MCF 10A (cell line): ENCODE measurements at regions of chr11 and their contacts with region 1.

Region 1: GRCh38 chr11:93234602-93235207 is 36.9 kb upstream of the SLC36A4 start:
- DNase-seq: peak; percentile 80
- H3K4me3 Mint-ChIP-seq: no peak overlapping the region
- H3K27ac Mint-ChIP-seq: no peak overlapping the region
- H3K4me1 Mint-ChIP-seq: no peaks in the 10 kb centered on the region
- H3K27me3 Mint-ChIP-seq: peaks cover 22% of the 10 kb centered on the region
- CTCF ChIP-seq: peak; percentile 91

Region 2: GRCh38 chr11:93248602-93249001 is 13.9 kb after region 1 on chr11:
- CTCF ChIA-PET with region 1: interaction called, 28 read pairs
- POLR2A ChIA-PET with region 1: no interaction called
- intact Hi-C with region 1: no loop called
- DNase-seq: no peak
- H3K4me3 Mint-ChIP-seq: no peak overlapping the region
- H3K27ac Mint-ChIP-seq: no peak overlapping the region
- H3K4me1 Mint-ChIP-seq: no peaks in the 10 kb centered on the region
- H3K27me3 Mint-ChIP-seq: no peaks in the 10 kb centered on the region
- CTCF ChIP-seq: peak; percentile 17

Region 3: GRCh38 chr11:93543292-93543977 is 308.7 kb after region 1 on chr11 and contains the start of gene SMCO4:
- CTCF ChIA-PET with region 1: interaction called, 94 read pairs
- POLR2A ChIA-PET with region 1: no interaction called
- intact Hi-C with region 1: loop called (anchors 1 kb)
- DNase-seq: peak; percentile 79
- H3K4me3 Mint-ChIP-seq: peak within 1 kb of the TSS; percentile 79
- H3K27ac Mint-ChIP-seq: peak within 1 kb of the TSS; percentile 57
- H3K4me1 Mint-ChIP-seq: peaks cover 8% of the 10 kb centered on the region
- H3K27me3 Mint-ChIP-seq: peaks cover 11% of the 10 kb centered on the region
- CTCF ChIP-seq: peak; percentile 78
- total RNA-seq, gene SMCO4: 8.5 and 10.0 TPM in 2 replicates

Region 4: DNA sequence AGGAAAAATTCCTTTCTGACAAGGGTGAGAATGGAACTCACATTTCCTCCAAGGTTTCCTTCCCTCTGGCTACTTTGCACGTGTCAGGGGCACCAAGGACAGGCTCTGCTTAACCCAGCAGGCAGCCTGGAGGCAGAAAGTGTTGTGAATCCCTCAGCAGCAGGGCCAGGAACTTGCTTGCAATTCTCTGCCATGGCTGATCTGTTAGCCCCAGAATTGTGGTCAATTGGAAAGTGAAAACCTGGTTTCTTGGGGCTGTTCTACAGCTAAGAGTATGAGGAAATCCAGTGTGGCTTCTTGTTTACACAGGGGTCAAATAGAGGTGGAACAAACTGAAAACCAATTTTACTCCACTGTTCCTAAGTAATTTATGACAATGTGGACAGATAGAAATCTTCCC is 388.5 kb after region 1 on chr11:
- CTCF ChIA-PET with region 1: interaction called, 10 read pairs
- POLR2A ChIA-PET with region 1: no interaction called
- intact Hi-C with region 1: loop called (anchors 1 kb)
- DNase-seq: no peak
- H3K4me3 Mint-ChIP-seq: no peak overlapping the region
- H3K27ac Mint-ChIP-seq: no peak overlapping the region
- H3K4me1 Mint-ChIP-seq: no peaks in the 10 kb centered on the region
- H3K27me3 Mint-ChIP-seq: no peaks in the 10 kb centered on the region
- CTCF ChIP-seq: no peak

Region 5: DNA sequence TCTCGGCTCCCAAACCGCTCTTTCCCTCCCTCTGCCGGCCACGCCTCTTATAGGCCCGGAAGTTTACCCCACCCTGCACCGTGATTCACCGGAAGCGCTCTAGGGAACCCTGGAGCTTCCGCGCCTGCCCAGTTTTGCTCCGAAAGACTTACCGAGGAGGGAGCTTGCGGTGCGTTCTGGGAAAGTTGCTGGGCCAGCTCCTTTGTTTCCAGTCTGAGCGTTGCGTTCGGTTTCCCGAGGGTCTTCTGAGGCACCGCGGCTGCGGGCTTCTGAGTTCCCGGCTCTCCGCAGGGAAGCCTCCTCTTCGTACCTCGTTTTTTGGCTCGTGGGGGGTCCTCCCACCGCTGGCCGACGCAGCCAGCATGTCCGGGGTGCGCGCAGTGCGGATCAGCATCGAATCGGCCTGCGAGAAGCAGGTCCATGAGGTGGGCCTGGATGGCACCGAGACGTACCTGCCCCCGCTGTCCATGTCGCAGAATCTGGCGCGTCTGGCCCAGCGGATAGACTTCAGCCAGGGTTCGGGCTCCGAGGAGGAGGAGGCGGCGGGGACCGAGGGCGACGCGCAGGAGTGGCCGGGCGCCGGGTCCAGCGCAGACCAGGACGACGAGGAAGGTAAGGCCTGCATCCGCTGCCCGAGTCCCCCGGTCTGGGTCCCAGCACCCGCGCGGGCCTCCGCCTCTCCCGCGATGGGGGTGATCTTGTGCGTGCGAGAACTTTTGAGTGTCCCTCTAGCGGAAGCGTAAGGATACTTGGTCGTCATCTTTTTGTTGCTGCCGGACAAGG is 549.6 kb after region 1 on chr11 and contains the start of gene MED17:
- CTCF ChIA-PET with region 1: no interaction called
- POLR2A ChIA-PET with region 1: no interaction called
- intact Hi-C with region 1: loop called (anchors 1 kb)
- DNase-seq: peak; percentile 95
- H3K4me3 Mint-ChIP-seq: peak within 1 kb of the TSS; percentile 84
- H3K27ac Mint-ChIP-seq: peak within 1 kb of the TSS; percentile 95
- H3K4me1 Mint-ChIP-seq: peaks cover 24% of the 10 kb centered on the region
- H3K27me3 Mint-ChIP-seq: no peaks in the 10 kb centered on the region
- CTCF ChIP-seq: peak; percentile 19
- total RNA-seq, gene MED17: 42.2 and 43.9 TPM in 2 replicates